ENCODE measurements at regions of chr10 and their contacts with region 1.

Region 1: GRCh38 chr10:110081911-110082310 is 74.1 kb downstream of the ADD3 start:
- DNase-seq: no peak
- H3K4me3 ChIP-seq: no peak overlapping the region
- H3K4me3 Mint-ChIP-seq: peak overlapping the region in 7 of 8 donors; percentile 40 to 83 (median 59)
- H3K27ac ChIP-seq: peak overlapping the region; percentile 41
- H3K27ac Mint-ChIP-seq: peak overlapping the region; percentile 86 to 94 (median 92)
- H3K4me1 ChIP-seq: peaks cover 99% of the 10 kb centered on the region
- H3K4me1 Mint-ChIP-seq: peaks cover 68 to 96% (median 82%) of the 10 kb centered on the region in 4 donors
- H3K27me3 ChIP-seq: no peaks in the 10 kb centered on the region
- H3K27me3 Mint-ChIP-seq: no peaks in the 10 kb centered on the region

Region 2: DNA sequence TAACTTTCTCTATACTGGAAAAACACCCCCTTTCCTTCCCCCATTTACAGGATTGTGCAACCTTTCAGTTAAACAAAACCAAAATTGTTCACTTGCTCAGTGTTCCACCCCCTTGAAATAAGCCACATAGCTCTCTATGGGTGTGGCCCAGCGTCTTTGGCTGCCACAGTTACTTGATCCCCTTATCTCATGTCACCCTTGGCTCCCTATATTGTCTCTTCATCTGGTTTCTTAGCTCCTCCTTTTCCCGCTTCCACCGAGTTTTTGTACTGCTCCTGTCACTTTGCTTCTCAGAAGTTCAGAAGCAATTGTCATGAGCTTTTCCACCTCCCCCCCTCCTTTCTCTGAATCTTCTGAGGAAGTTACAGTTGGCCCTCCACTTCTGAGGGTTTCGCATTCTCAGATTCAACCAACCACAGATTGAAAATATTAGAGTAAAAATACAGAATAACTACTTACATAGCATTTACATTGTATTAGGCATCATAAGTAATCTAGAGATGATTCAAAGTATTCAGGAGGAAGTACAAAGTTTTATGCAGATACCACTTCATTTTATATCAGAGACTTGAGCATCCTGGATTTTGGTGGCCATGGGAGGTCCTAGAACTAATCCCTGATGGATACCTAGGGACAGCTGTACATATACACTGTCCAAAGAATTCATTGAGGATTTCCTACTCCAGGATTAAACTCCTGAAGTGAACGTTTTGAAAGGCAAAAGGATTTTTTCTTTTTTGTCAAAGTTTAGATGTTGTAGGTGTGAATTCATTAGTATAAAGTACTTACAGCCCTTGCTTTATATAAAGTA is 13.7 kb before region 1 on chr10:
- CTCF ChIA-PET with region 1: interaction called, 18 read pairs
- POLR2A ChIA-PET with region 1: interaction called, 47 read pairs
- intact Hi-C with region 1: loop called (anchors 1 kb)
- DNase-seq: peak; percentile 43 to 72 (median 46)
- H3K4me3 ChIP-seq: no peak overlapping the region
- H3K4me3 Mint-ChIP-seq: peak overlapping the region; percentile 67 to 87 (median 80)
- H3K27ac ChIP-seq: peak overlapping the region; percentile 55
- H3K27ac Mint-ChIP-seq: peak overlapping the region; percentile 80 to 97 (median 92)
- H3K4me1 ChIP-seq: peaks cover 96% of the 10 kb centered on the region
- H3K4me1 Mint-ChIP-seq: peaks cover 60 to 96% (median 78%) of the 10 kb centered on the region in 4 donors
- H3K27me3 ChIP-seq: no peaks in the 10 kb centered on the region
- H3K27me3 Mint-ChIP-seq: no peaks in the 10 kb centered on the region